K562 (cell line): ENCODE measurements at regions of chr3 and their contacts with region 1.

Region 1: GRCh38 chr3:5426094-5426883 is 238.8 kb downstream of the EDEM1 start:
- DNase-seq: peak; percentile 77 to 96 (median 85)
- ATAC-seq: peak; percentile 80
- H3K4me3 ChIP-seq: no peak overlapping the region
- H3K27ac ChIP-seq: no peak overlapping the region; the same call in 2 of the 3 replicates
- H3K4me1 ChIP-seq: peaks cover 19 to 48% of the 10 kb centered on the region in 2 experiments
- H3K27me3 ChIP-seq: no peaks in the 10 kb centered on the region
- CTCF ChIP-seq: peak; percentile 89 to 99 (median 97)
- EP300 ChIP-seq: peak; percentile 51
- POLR2A ChIP-seq: no peak
- RAD21 ChIP-seq: peak; percentile 98

Region 2: DNA sequence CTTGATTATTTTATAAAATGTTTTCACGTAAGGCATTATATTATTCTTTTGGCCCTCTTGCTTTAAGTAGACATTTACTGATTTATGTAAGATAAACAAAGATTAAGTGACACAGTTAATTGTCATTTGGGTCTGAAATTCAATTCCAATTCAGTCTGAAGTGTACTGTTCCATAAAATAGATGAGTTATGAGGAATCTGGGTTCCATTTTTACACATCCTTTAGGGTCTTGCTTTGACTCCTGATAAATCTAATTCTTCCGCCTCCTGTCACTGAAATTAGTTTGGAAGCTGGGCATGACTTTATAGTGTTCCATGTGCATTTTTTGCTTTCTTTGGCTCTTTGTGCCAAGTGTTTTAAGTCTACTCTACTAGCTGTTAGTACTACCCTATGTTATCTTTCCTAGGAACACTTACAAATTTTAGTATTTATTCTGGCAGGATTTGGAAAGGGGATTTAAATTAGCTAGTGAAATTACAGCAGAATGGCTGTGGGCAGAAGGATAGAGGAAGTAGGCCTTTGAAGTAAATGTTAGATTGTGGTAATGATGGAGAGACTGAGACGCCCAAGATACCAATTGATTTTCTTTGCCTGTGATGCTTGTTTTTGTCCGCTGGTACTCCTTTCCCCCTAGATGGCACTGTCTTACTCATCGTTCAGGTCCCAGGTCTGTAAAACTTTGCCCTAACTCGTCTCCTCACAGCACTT is 289.9 kb before region 1 on chr3:
- CTCF ChIA-PET with region 1: no interaction called
- POLR2A ChIA-PET with region 1: no interaction called
- in situ Hi-C with region 1: no loop called
- intact Hi-C with region 1: loop called (anchors 10 kb)
- DNase-seq: peak in 2 of 4 experiments; percentile 52 to 55
- ATAC-seq: peak; percentile 78
- H3K4me3 ChIP-seq: no peak overlapping the region
- H3K27ac ChIP-seq: no peak overlapping the region
- H3K4me1 ChIP-seq: 0 out of 5 replicates have a peak, but pooled peaks cover 0 to 7% of the 10 kb centered on the region in 2 experiments
- H3K27me3 ChIP-seq: no peaks in the 10 kb centered on the region
- CTCF ChIP-seq: peak; percentile 46 to 73 (median 62)
- EP300 ChIP-seq: no peak
- POLR2A ChIP-seq: no peak
- RAD21 ChIP-seq: peak; percentile 48 to 65

Region 3: GRCh38 chr3:5476403-5476802 is 50.1 kb after region 1 on chr3:
- CTCF ChIA-PET with region 1: no interaction called
- POLR2A ChIA-PET with region 1: interaction called, 3 read pairs
- in situ Hi-C with region 1: no loop called
- intact Hi-C with region 1: loop called (anchors 2 kb)
- DNase-seq: peak in 3 of 4 experiments; percentile 16 to 24 (median 21)
- ATAC-seq: peak; percentile 83
- H3K4me3 ChIP-seq: no peak overlapping the region
- H3K27ac ChIP-seq: no peak overlapping the region
- H3K4me1 ChIP-seq: peaks cover 0 to 11% of the 10 kb centered on the region in 2 experiments; a peak in 3 of 5 replicates
- H3K27me3 ChIP-seq: no peaks in the 10 kb centered on the region
- CTCF ChIP-seq: peak; percentile 28 to 44 (median 41); a peak in 5 of 6 replicates
- EP300 ChIP-seq: no peak
- POLR2A ChIP-seq: no peak
- RAD21 ChIP-seq: no peak

Region 4: GRCh38 chr3:5583920-5584319 is 157.6 kb after region 1 on chr3:
- CTCF ChIA-PET with region 1: no interaction called
- POLR2A ChIA-PET with region 1: no interaction called
- in situ Hi-C with region 1: no loop called
- intact Hi-C with region 1: loop called (anchors 5 kb)
- DNase-seq: peak in 2 of 4 experiments; percentile 32 to 34
- ATAC-seq: peak; percentile 78
- H3K4me3 ChIP-seq: no peak overlapping the region
- H3K27ac ChIP-seq: no peak overlapping the region
- H3K4me1 ChIP-seq: peaks cover 0 to 35% of the 10 kb centered on the region in 2 experiments; a peak in 4 of 5 replicates
- H3K27me3 ChIP-seq: no peaks in the 10 kb centered on the region; a peak in 1 of 5 replicates
- CTCF ChIP-seq: peak in 2 of 3 experiments; percentile 46 to 57; a peak in 2 of 6 replicates
- EP300 ChIP-seq: no peak
- POLR2A ChIP-seq: no peak
- RAD21 ChIP-seq: peak; percentile 55 to 65

Region 5: DNA sequence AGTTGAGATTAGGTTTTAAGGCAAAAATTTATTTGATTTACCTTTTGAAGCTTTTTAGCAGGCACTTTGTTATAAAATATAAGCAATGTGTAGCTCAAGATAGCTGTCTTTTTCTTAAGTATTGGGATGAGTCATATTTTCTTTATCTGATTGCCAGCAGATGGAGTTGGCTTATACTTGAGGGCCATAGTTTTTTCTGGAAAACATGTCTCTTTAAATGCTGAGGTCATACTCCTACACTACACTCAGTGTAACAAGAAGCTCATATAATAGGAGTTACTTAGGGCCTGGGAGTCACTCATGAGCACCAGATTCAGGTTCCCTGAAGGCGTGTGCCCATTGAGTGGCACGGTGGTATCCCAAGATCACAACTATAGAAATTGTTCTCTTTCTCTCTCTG is 341.0 kb after region 1 on chr3:
- CTCF ChIA-PET with region 1: no interaction called
- POLR2A ChIA-PET with region 1: interaction called, 4 read pairs
- in situ Hi-C with region 1: no loop called
- intact Hi-C with region 1: loop called (anchors 1 kb)
- DNase-seq: peak; percentile 53 to 74 (median 68)
- ATAC-seq: peak; percentile 91
- H3K4me3 ChIP-seq: no peak overlapping the region
- H3K27ac ChIP-seq: peak overlapping the region; percentile 60; the same call in 2 of the 3 replicates
- H3K4me1 ChIP-seq: peaks cover 9 to 31% of the 10 kb centered on the region in 2 experiments
- H3K27me3 ChIP-seq: no peaks in the 10 kb centered on the region
- CTCF ChIP-seq: no peak
- EP300 ChIP-seq: peak; percentile 83
- POLR2A ChIP-seq: no peak
- RAD21 ChIP-seq: 0 out of 4 replicates have a peak, but pooled peaks of 1 of the 2 experiments have one; percentile 4

Region 6: GRCh38 chr3:5891711-5892110 is 465.4 kb after region 1 on chr3:
- CTCF ChIA-PET with region 1: no interaction called
- POLR2A ChIA-PET with region 1: no interaction called
- in situ Hi-C with region 1: no loop called
- intact Hi-C with region 1: loop called (anchors 10 kb)
- DNase-seq: no peak
- ATAC-seq: no peak
- H3K4me3 ChIP-seq: no peak overlapping the region
- H3K27ac ChIP-seq: no peak overlapping the region
- H3K4me1 ChIP-seq: no peaks in the 10 kb centered on the region
- H3K27me3 ChIP-seq: no peaks in the 10 kb centered on the region
- CTCF ChIP-seq: no peak
- EP300 ChIP-seq: no peak
- POLR2A ChIP-seq: no peak
- RAD21 ChIP-seq: no peak